GM12878 (cell line): ENCODE measurements at regions of chrX and their contacts with region 1.

Region 1: DNA sequence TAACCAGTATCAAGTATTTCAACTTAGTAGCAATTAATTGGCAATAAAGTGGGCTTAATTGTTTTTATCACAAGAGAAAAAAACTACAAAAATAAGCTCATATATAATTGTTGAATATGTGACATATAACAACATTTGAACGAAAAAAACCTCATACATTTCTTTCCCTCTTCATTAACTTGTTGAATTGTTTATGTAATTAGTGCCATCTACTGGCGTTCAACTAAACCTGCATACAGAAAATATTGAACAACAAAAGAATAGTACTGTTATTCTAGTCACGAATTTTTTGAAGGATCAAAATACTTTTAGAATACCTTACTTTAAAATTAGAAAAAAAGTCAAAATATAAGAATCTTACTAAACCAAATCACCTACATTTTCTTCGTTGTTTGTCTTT is 586.5 kb upstream of the FTHL17 start:
- DNase-seq: no peak
- ATAC-seq: peak; percentile 65
- H3K4me3 ChIP-seq: no peak overlapping the region
- H3K27ac ChIP-seq: no peak overlapping the region
- H3K4me1 ChIP-seq: no peaks in the 10 kb centered on the region
- H3K27me3 ChIP-seq: no peaks in the 10 kb centered on the region
- CTCF ChIP-seq: peak; percentile 24 to 61 (median 40); a peak in 4 of 6 replicates
- EP300 ChIP-seq: no peak
- POLR2A ChIP-seq: no peak
- RAD21 ChIP-seq: peak; percentile 64

Region 2: DNA sequence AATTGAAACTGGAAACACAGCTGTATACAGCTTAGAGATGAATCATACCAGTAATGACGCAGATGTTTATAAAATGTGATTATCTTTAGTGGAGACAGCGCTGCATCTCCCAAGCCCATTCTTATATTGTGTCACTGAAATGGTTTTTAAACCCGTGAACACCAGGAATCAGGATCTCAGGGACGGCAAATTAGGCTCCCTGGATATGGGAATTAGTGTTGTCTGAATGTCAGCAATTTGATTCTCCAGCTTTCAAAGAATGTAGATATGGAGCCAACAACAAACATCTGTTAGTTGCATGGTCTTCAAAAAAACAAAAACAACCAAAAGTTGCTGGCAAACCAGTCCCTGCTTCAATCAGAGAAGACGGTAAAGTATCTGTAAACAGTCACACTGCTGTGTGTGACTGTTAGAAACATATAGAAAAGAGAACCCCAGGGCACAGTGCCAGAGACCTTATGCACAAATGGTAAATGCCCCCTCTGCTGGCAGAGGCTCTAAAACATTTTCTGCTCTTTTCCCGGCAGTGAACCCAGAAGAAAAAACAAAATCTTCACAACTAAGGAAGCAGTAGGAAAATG is 234.7 kb before region 1 on chrX:
- CTCF ChIA-PET with region 1: interaction called, 11 read pairs
- POLR2A ChIA-PET with region 1: no interaction called
- RAD21 ChIA-PET with region 1: no interaction called
- SMC1A ChIA-PET with region 1: interaction called, 5 read pairs
- in situ Hi-C with region 1: no loop called
- intact Hi-C with region 1: no loop called
- DNase-seq: no peak
- ATAC-seq: peak; percentile 72
- H3K4me3 ChIP-seq: no peak overlapping the region
- H3K27ac ChIP-seq: no peak overlapping the region
- H3K4me1 ChIP-seq: no peaks in the 10 kb centered on the region
- H3K27me3 ChIP-seq: no peaks in the 10 kb centered on the region
- CTCF ChIP-seq: peak; percentile 14 to 40 (median 34); a peak in 4 of 6 replicates
- EP300 ChIP-seq: no peak
- POLR2A ChIP-seq: no peak
- RAD21 ChIP-seq: no peak

Region 3: GRCh38 chrX:31449965-31450364 is 208.4 kb before region 1 on chrX:
- CTCF ChIA-PET with region 1: interaction called, 3 read pairs
- POLR2A ChIA-PET with region 1: no interaction called
- RAD21 ChIA-PET with region 1: no interaction called
- SMC1A ChIA-PET with region 1: interaction called, 3 read pairs
- in situ Hi-C with region 1: no loop called
- intact Hi-C with region 1: loop called (anchors 10 kb)
- DNase-seq: no peak
- ATAC-seq: no peak
- H3K4me3 ChIP-seq: no peak overlapping the region
- H3K27ac ChIP-seq: no peak overlapping the region
- H3K4me1 ChIP-seq: no peaks in the 10 kb centered on the region
- H3K27me3 ChIP-seq: no peaks in the 10 kb centered on the region
- CTCF ChIP-seq: no peak
- EP300 ChIP-seq: no peak
- POLR2A ChIP-seq: no peak
- RAD21 ChIP-seq: no peak

Region 4: DNA sequence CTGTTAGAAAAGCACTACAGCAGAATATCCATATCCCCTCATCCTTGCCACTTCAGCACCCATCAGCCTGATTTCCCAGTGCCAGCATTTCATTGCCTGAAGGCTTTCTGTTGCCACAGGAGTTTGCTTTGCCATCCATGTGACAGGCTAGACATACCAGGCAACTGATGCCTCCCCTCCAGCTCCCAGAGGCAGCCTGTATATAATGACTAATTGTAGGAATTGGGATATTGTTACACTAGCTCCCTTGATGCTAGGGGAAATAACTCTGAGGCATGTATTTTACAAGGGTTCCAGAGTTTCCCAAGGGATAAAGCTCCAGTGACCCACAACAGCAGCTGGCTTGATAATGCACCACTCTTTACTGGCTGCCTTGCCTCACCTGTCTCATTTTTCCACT is 21.5 kb after region 1 on chrX:
- CTCF ChIA-PET with region 1: no interaction called
- POLR2A ChIA-PET with region 1: no interaction called
- RAD21 ChIA-PET with region 1: no interaction called
- SMC1A ChIA-PET with region 1: no interaction called
- in situ Hi-C with region 1: no loop called
- intact Hi-C with region 1: no loop called
- DNase-seq: no peak
- ATAC-seq: no peak
- H3K4me3 ChIP-seq: no peak overlapping the region
- H3K27ac ChIP-seq: no peak overlapping the region
- H3K4me1 ChIP-seq: no peaks in the 10 kb centered on the region
- H3K27me3 ChIP-seq: no peaks in the 10 kb centered on the region
- CTCF ChIP-seq: no peak
- EP300 ChIP-seq: no peak
- POLR2A ChIP-seq: no peak
- RAD21 ChIP-seq: no peak